ENCODE measurements at regions of chr9 and their contacts with region 1.

Region 1: DNA sequence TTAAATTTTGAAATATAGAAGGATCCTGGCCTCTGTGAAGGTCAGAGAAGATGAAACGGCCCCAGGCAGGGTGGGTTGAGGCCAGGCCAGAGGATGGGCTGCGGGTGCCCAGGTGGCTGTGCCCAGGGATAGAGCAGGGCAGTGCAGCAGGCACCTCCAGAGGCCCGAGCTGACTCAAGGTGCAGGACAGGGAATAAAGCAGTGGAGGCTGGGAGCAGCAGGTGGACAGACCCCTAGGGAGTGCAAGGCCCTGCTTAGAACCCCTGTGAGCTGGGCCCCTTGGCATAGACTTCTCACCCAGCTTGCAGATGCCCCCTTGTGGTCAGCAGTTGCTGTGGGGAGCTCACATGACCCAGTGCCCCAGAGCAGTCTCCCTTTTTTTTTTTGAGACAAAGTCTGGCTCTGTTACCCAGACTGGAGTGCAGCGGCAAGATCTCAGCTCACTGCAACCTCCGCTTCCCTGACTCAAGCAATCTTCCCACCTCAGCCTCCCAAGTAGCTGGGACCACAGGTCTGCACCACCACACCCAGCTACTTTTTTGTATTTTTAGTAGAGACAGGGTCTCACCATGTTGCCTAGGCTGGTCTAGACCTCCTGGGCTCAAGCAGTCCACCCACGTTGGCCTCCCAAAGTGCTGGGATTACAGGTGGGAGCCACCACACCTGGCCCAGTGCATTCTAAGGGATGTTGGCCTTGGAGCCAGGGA is 118.8 kb downstream of the WNK2 start:
- DNase-seq: peak; percentile 52 to 80 (median 77)
- ATAC-seq: peak; percentile 22 to 23
- H3K4me3 ChIP-seq: no peak overlapping the region
- H3K27ac ChIP-seq: no peak overlapping the region
- H3K4me1 ChIP-seq: peaks cover 1% of the 10 kb centered on the region
- H3K27me3 ChIP-seq: no peaks in the 10 kb centered on the region

Region 2: GRCh38 chr9:93108291-93109041 is 194.2 kb before region 1 on chr9:
- intact Hi-C with region 1: loop called in 1 of 4 experiments (anchors 10 kb)
- DNase-seq: peak in 2 of 3 donors; percentile 41 to 51
- ATAC-seq: peak in 1 of 2 donors; percentile 10
- H3K4me3 ChIP-seq: no peak overlapping the region
- H3K27ac ChIP-seq: no peak overlapping the region
- H3K4me1 ChIP-seq: no peaks in the 10 kb centered on the region
- H3K27me3 ChIP-seq: no peaks in the 10 kb centered on the region

Region 3: GRCh38 chr9:93159601-93160471 is 142.9 kb before region 1 on chr9:
- intact Hi-C with region 1: loop called (anchors 2 to 5 kb)
- DNase-seq: peak; percentile 82 to 95 (median 95)
- ATAC-seq: peak; percentile 94 to 95
- H3K4me3 ChIP-seq: no peak overlapping the region
- H3K27ac ChIP-seq: no peak overlapping the region
- H3K4me1 ChIP-seq: no peaks in the 10 kb centered on the region
- H3K27me3 ChIP-seq: no peaks in the 10 kb centered on the region